Posterior vena cava (tissue), 2 donors: ENCODE measurements at regions of chr17 and their contacts with region 1.

Region 1: GRCh38 chr17:40279407-40279806 is 8.3 kb upstream of the CDC6 start:
- DNase-seq: no peak

Region 2: GRCh38 chr17:40219073-40219860 is 60.1 kb before region 1 on chr17 and contains the start of gene WIPF2:
- intact Hi-C with region 1: loop called in 1 of 2 experiments (anchors 10 kb)
- DNase-seq: peak; percentile 99
- total RNA-seq, gene WIPF2: 24.8 to 28.9 TPM

Region 3: DNA sequence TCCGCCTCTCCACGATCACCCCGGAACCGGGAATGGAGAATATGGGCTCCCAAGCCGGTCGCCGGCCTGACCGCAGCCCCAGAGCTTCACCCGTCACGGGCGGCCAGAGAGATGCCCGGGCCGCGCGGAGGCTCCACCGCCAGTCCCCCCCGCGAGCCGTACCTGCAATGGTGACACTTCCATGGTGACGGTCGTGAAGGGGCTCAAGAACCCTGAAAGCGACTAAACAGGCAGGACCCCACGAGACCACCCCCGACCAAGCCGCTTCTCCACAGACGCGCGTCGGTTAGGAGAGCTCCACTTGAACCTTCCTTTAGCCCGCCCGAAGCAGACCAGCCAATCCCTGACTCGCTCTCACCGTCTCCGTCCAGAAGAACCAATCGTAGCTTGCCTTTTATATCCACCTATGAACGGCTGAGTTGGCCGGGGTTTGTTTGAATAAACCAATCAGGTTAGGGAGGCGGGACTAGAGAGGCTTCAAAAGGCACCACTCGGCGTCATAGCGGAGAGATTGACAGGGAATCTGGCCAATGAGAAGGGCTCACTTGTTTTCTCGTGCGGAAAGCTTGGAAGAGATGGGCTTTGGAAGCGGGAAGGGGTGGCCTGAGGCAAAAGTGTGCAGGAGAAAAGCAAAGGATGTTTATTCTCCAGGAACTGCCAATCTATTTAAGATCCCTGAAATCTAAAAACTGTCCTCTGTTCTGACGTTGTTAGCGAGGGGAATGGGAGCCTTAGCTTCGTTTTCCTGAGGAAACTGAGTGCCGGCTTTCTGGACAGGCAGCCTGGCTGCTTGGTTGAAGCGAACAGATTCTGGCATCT is 138.4 kb after region 1 on chr17 and contains the start of gene TOP2A:
- intact Hi-C with region 1: no loop called
- DNase-seq: peak; percentile 96
- total RNA-seq, gene TOP2A: 1.1 to 2.2 TPM